Natural killer cell (primary cell): ENCODE measurements at regions of chr13 and their contacts with region 1.

Region 1: GRCh38 chr13:74287724-74288169 is 153.5 kb upstream of the KLF12 start:
- DNase-seq: peak; percentile 40 to 98
- ATAC-seq: peak; percentile 52 to 65 (median 61)
- H3K4me3 ChIP-seq: peak overlapping the region; percentile 19
- H3K4me3 Mint-ChIP-seq: peak overlapping the region; percentile 93
- H3K27ac ChIP-seq: peak overlapping the region; percentile 76
- H3K27ac Mint-ChIP-seq: peak overlapping the region; percentile 93 to 95
- H3K4me1 ChIP-seq: peaks cover 20% of the 10 kb centered on the region
- H3K4me1 Mint-ChIP-seq: peaks cover 50 to 61% of the 10 kb centered on the region in 2 donors
- H3K27me3 ChIP-seq: no peaks in the 10 kb centered on the region
- H3K27me3 Mint-ChIP-seq: no peaks in the 10 kb centered on the region
- CTCF ChIP-seq: no peak

Region 2: DNA sequence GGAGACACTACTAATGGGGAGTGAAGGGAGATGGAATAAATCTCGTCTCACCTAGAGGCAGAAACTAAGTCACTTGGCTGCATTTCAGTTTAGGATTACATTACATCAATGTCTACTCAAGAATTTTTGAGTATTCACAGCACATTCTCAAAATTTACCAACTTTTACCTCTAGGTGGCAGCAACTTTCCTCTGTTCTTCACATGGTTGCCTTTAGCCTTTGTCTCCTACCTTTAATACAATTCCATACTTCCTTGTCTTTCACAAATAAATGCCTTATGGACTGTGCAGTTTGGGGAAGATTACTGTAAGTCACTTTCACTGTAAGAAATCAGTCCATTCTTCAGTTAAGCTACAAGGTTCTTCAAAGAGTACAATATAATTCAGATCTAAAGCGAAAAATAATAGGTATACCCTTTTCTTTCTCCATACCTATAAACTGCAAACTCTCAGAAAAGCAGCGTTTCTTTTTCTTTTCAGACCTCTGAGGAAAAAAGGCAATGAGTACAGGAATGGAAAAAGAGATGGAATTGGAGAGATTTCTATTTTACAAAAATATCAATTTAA is 532.9 kb before region 1 on chr13:
- intact Hi-C with region 1: loop called (anchors 2 kb)
- DNase-seq: peak in 1 of 2 donors; percentile 80
- ATAC-seq: peak; percentile 41 to 70 (median 62)
- H3K4me3 ChIP-seq: no peak overlapping the region
- H3K4me3 Mint-ChIP-seq: no peak overlapping the region
- H3K27ac ChIP-seq: no peak overlapping the region
- H3K27ac Mint-ChIP-seq: peak overlapping the region; percentile 8 to 44
- H3K4me1 ChIP-seq: peaks cover 5% of the 10 kb centered on the region
- H3K4me1 Mint-ChIP-seq: peaks cover 31 to 35% of the 10 kb centered on the region in 2 donors
- H3K27me3 ChIP-seq: no peaks in the 10 kb centered on the region
- H3K27me3 Mint-ChIP-seq: no peaks in the 10 kb centered on the region
- CTCF ChIP-seq: peak; percentile 80

Region 3: DNA sequence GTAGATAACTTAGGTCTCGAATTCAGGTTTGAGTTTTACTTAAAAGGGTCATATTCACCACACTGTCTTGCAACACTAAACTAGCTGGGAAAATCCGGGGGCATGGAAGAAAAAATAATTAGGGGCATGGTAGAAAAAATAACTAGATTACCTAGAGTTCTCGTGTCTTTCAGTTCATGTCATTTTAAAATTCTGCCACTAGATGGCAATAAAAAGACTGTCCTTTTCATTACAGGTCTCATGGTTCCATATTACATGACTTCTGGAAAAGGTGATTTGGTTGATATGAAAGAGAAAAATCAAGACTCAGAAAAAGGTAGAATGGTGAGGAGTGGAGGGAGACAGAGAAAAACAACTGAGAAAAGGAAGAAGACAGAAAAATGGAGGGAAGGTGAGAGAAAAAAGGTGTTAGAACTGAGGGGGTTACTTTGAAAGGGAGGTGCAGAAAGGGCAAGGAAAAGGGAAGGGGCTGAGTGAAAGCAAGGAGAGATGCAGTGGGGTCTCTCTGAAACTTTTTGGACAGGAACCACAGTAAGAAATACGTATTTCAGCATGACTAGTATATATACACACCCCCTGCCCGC is 452.5 kb before region 1 on chr13:
- intact Hi-C with region 1: loop called (anchors 1 kb)
- DNase-seq: peak in 1 of 2 donors; percentile 70
- ATAC-seq: peak in 2 of 3 donors; percentile 59 to 60
- H3K4me3 ChIP-seq: no peak overlapping the region
- H3K4me3 Mint-ChIP-seq: no peak overlapping the region
- H3K27ac ChIP-seq: no peak overlapping the region
- H3K27ac Mint-ChIP-seq: no peak overlapping the region
- H3K4me1 ChIP-seq: no peaks in the 10 kb centered on the region
- H3K4me1 Mint-ChIP-seq: peaks cover 29 to 43% of the 10 kb centered on the region in 2 donors
- H3K27me3 ChIP-seq: no peaks in the 10 kb centered on the region
- H3K27me3 Mint-ChIP-seq: no peaks in the 10 kb centered on the region
- CTCF ChIP-seq: peak; percentile 87

Region 4: GRCh38 chr13:73943137-73943964 is 344.4 kb before region 1 on chr13:
- intact Hi-C with region 1: loop called (anchors 5 kb)
- DNase-seq: peak in 1 of 2 donors; percentile 67
- ATAC-seq: peak; percentile 82 to 88 (median 87)
- H3K4me3 ChIP-seq: no peak overlapping the region
- H3K4me3 Mint-ChIP-seq: peak overlapping the region; percentile 51
- H3K27ac ChIP-seq: peak overlapping the region; percentile 76
- H3K27ac Mint-ChIP-seq: peak overlapping the region; percentile 81 to 83
- H3K4me1 ChIP-seq: peaks cover 22% of the 10 kb centered on the region
- H3K4me1 Mint-ChIP-seq: peaks cover 69 to 72% of the 10 kb centered on the region in 2 donors
- H3K27me3 ChIP-seq: no peaks in the 10 kb centered on the region
- H3K27me3 Mint-ChIP-seq: no peaks in the 10 kb centered on the region
- CTCF ChIP-seq: no peak

Region 5: GRCh38 chr13:74243637-74244526 is 43.9 kb before region 1 on chr13:
- intact Hi-C with region 1: loop called (anchors 2 kb)
- DNase-seq: peak in 1 of 2 donors; percentile 70
- ATAC-seq: peak; percentile 76 to 89 (median 84)
- H3K4me3 ChIP-seq: no peak overlapping the region
- H3K4me3 Mint-ChIP-seq: peak overlapping the region; percentile 91
- H3K27ac ChIP-seq: peak overlapping the region; percentile 87
- H3K27ac Mint-ChIP-seq: peak overlapping the region; percentile 95 to 98
- H3K4me1 ChIP-seq: peaks cover 26% of the 10 kb centered on the region
- H3K4me1 Mint-ChIP-seq: peaks cover 68% of the 10 kb centered on the region in 2 donors
- H3K27me3 ChIP-seq: no peaks in the 10 kb centered on the region
- H3K27me3 Mint-ChIP-seq: no peaks in the 10 kb centered on the region
- CTCF ChIP-seq: no peak